GM13977 (cell line): ENCODE measurements at regions of chr17 and their contacts with region 1.

Region 1: DNA sequence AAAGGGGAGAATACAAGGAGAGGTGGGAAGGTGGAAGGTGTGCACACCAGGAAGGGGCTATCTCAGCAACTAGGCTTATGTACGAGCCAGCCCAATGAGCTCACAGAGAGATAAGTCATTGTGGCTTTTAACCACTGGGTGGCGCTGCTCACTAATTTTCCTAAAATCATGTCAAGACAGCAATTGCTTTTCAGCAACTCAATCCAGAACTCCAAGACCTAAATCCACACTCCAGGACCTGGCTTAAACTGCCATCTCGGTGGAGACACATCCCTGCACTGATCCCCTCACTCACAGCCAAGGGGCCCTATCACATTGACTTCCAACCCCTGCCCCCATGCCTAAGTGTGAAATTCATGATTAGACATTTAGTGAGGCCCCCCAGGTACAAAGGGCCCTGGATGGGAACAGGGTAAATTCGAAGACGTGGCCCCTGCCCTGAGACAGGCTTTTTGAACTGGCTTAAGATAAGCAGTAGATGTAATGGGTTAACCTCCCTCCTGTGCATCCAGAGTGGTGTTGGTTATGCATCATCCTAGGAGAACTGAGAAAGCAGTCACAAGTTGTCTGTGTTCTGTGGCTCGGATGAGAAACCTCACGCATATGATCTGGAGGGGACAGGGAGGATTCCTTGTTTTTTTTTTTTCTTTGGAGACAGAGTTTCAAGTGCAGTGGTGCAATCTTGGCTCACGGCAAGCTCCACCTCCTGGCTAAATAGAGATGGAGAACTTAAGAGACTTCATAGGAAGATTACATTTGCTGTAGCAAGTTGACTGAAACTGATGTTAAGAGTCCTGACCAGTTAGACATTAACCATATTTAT is 11.5 kb downstream of the CCL16 start:
- DNase-seq: peak; percentile 66
- CTCF ChIP-seq: peak; percentile 82

Region 2: DNA sequence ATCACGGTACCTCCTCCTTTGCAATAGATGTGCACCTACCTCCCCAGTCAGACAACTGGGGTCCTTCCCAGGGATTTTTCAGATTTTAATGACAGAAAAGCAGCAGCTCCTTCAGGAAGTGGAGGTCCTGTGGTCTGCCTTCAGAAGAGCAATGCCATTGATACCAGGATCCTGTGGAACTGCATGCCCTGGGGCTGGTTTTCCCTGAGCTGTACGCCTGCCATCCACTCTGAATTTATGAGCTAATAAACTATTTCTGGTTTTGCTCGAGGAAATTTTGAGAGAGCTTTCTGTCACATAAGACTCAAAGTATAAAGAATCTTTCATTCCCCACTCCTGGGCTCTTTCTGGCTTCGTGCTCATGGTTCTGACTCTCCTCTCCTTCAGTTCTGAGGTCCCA is 58.0 kb after region 1 on chr17:
- in situ Hi-C with region 1: no loop called
- DNase-seq: no peak
- CTCF ChIP-seq: no peak

Region 3: GRCh38 chr17:36127199-36127893 is 157.6 kb after region 1 on chr17:
- in situ Hi-C with region 1: no loop called
- DNase-seq: peak; percentile 27
- CTCF ChIP-seq: no peak

Region 4: GRCh38 chr17:36148559-36149295 is 179.0 kb after region 1 on chr17:
- in situ Hi-C with region 1: loop called (anchors 10 kb)
- DNase-seq: peak; percentile 75
- CTCF ChIP-seq: peak; percentile 98